ENCODE measurements at regions of chr9 and their contacts with region 1.

Region 1: GRCh38 chr9:93159601-93160471 is 24.1 kb upstream of the WNK2 start:
- DNase-seq: peak; percentile 75 to 81
- ATAC-seq: peak; percentile 88 to 94
- H3K4me3 ChIP-seq: peak overlapping the region in 1 of 4 donors; percentile 11
- H3K27ac ChIP-seq: no peak overlapping the region
- H3K4me1 ChIP-seq: peaks cover 3 to 18% of the 10 kb centered on the region in 2 donors
- H3K27me3 ChIP-seq: no peaks in the 10 kb centered on the region
- CTCF ChIP-seq: peak; percentile 96 to 99 (median 97)
- POLR2A ChIP-seq: no peak

Region 2: DNA sequence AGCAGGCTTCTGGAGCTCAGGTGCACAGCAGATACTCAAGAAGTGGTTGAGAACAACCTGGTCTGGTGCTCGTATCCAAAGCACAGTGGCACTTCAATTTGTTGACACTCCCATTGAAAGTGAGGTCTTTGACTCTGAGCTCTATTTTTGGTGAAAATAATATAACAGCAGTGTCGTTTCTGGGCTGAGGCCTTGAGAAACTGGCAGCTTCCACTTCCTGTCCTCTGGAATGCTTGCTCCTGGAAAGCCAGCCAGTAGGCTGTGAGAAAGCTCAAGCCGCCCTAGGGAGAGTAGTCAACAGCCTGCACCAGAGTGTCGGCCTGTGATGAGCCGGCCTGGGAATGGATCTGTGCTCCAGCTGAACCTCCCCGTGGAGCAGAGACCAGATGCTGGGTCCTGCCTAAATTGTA is 108.2 kb before region 1 on chr9:
- in situ Hi-C with region 1: no loop called
- intact Hi-C with region 1: no loop called
- DNase-seq: no peak
- ATAC-seq: peak in 1 of 2 donors; percentile 70
- H3K4me3 ChIP-seq: no peak overlapping the region
- H3K27ac ChIP-seq: peak overlapping the region in 2 of 4 donors; percentile 11 to 48
- H3K4me1 ChIP-seq: no peaks in the 10 kb centered on the region
- H3K27me3 ChIP-seq: no peaks in the 10 kb centered on the region
- CTCF ChIP-seq: no peak
- POLR2A ChIP-seq: no peak

Region 3: GRCh38 chr9:93108291-93109041 is 51.4 kb before region 1 on chr9:
- in situ Hi-C with region 1: no loop called
- intact Hi-C with region 1: loop called (anchors 1 kb)
- DNase-seq: peak in 1 of 2 donors; percentile 15
- ATAC-seq: no peak
- H3K4me3 ChIP-seq: no peak overlapping the region
- H3K27ac ChIP-seq: peak overlapping the region in 1 of 4 donors; percentile 16
- H3K4me1 ChIP-seq: peaks cover 3 to 11% of the 10 kb centered on the region in 2 donors
- H3K27me3 ChIP-seq: no peaks in the 10 kb centered on the region
- CTCF ChIP-seq: no peak
- POLR2A ChIP-seq: no peak

Region 4: GRCh38 chr9:93207326-93207814 is 47.5 kb after region 1 on chr9:
- in situ Hi-C with region 1: no loop called
- intact Hi-C with region 1: loop called (anchors 5 kb)
- DNase-seq: peak; percentile 61 to 78
- ATAC-seq: peak; percentile 92 to 94
- H3K4me3 ChIP-seq: peak overlapping the region in 3 of 4 donors; percentile 15 to 41 (median 20)
- H3K27ac ChIP-seq: peak overlapping the region; percentile 82 to 90 (median 86)
- H3K4me1 ChIP-seq: peaks cover 52 to 56% of the 10 kb centered on the region in 2 donors
- H3K27me3 ChIP-seq: no peaks in the 10 kb centered on the region
- CTCF ChIP-seq: peak in 2 of 5 experiments; percentile 28 to 30
- POLR2A ChIP-seq: no peak

Region 5: DNA sequence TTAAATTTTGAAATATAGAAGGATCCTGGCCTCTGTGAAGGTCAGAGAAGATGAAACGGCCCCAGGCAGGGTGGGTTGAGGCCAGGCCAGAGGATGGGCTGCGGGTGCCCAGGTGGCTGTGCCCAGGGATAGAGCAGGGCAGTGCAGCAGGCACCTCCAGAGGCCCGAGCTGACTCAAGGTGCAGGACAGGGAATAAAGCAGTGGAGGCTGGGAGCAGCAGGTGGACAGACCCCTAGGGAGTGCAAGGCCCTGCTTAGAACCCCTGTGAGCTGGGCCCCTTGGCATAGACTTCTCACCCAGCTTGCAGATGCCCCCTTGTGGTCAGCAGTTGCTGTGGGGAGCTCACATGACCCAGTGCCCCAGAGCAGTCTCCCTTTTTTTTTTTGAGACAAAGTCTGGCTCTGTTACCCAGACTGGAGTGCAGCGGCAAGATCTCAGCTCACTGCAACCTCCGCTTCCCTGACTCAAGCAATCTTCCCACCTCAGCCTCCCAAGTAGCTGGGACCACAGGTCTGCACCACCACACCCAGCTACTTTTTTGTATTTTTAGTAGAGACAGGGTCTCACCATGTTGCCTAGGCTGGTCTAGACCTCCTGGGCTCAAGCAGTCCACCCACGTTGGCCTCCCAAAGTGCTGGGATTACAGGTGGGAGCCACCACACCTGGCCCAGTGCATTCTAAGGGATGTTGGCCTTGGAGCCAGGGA is 142.9 kb after region 1 on chr9:
- in situ Hi-C with region 1: loop called (anchors 5 to 10 kb)
- intact Hi-C with region 1: loop called (anchors 1 kb)
- DNase-seq: peak in 1 of 2 donors; percentile 58
- ATAC-seq: no peak
- H3K4me3 ChIP-seq: no peak overlapping the region
- H3K27ac ChIP-seq: peak overlapping the region in 1 of 4 donors; percentile 26
- H3K4me1 ChIP-seq: peaks cover 66 to 71% of the 10 kb centered on the region in 2 donors
- H3K27me3 ChIP-seq: no peaks in the 10 kb centered on the region
- CTCF ChIP-seq: peak in 4 of 5 experiments; percentile 33 to 59 (median 49)
- POLR2A ChIP-seq: no peak

Region 6: DNA sequence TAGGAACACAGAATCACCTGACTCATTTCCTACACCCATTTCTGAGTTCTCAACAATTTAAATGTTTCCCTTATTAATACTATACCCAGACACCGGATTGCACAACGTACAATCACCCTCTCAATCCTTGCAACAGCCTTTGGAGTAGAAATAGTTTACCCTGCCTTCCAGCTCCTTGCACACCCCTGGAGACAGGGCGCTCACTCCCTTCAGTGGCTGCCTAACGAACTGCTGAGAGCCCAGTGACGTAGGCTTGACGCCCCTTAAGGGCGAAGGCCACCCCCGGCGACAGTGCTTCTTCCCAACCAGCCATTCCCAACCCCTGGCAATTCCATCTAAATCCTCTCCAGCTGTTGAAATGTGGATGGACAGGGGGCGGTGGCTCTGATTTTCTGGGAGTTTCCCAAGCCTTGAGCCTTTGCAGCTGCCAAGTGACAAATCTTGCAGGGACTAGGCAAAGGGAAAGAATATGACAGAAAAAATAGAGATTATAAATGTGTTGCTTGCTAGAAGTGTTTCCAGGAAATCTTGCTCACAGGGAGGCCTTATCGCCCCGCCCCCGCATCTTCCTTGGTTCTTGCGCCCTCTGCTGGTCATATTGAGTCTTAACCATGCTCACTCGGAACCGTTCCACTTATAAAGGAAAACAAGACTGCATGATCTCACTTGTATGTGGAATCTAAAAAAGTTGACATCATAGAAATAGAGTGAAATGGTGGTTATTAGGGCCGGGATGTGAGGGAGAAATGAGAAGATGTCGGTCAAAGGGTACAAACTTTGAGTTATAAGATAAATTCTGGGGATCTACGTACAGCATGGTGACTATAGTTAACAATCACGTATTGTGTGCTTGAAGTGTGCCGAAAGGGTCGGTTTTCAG is 803.0 kb after region 1 on chr9:
- in situ Hi-C with region 1: loop called in 2 of 4 experiments (anchors 25 kb)
- intact Hi-C with region 1: no loop called
- DNase-seq: peak; percentile 57 to 59
- ATAC-seq: peak; percentile 74 to 90
- H3K4me3 ChIP-seq: no peak overlapping the region
- H3K27ac ChIP-seq: no peak overlapping the region
- H3K4me1 ChIP-seq: peaks cover 14 to 15% of the 10 kb centered on the region in 2 donors
- H3K27me3 ChIP-seq: peaks cover 35 to 38% (median 36%) of the 10 kb centered on the region in 3 donors
- CTCF ChIP-seq: peak; percentile 64 to 85 (median 73)
- POLR2A ChIP-seq: no peak

Measured in gastrocnemius medialis (tissue), 4 donors.